ENCODE measurements at regions of chrX and their contacts with region 1.

Region 1: GRCh38 chrX:131938749-131939148 is 84.4 kb upstream of the STK26 start:
- DNase-seq: no peak
- H3K4me3 ChIP-seq: no peak overlapping the region
- CTCF ChIP-seq: no peak

Region 2: DNA sequence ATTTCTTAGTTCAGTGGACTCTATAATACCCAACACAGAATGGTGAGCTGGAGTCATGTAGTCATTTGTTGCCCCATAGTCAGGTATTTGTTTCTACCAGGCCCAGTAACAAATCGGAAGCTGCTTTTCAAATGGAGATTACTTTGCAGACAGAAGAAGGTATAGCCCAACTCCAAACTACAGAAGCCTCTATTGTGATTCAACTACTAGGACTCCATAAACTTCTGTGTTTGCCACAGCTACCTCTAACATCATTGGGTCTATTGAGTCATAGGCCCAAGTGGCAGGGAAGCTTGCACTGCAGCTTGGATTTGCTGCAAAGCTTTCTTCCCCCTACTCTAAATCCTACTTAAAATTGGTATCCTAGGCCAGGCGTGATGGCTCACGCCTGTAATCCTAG is 64.4 kb before region 1 on chrX:
- in situ Hi-C with region 1: no loop called
- DNase-seq: no peak
- H3K4me3 ChIP-seq: no peak overlapping the region
- CTCF ChIP-seq: no peak

Region 3: DNA sequence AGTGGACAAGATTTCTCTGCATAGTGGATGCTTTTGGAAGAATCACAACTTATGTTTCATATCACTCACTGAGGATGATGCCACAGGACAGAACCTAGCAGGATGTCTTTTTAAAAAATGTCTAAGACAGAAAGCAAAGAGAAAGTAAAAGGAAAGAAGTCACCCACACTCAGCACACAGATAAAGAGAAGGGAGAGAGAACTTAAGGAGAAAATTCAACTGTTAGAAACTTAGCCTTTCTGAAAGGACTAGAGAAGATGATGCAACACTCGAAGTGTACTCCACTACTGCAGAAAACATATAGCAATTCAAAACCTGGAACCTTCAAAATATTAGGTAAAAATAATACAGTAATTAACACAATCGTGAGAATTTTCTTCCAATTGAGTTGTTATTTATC is 31.6 kb after region 1 on chrX:
- in situ Hi-C with region 1: loop called (anchors 5 kb)
- DNase-seq: no peak
- H3K4me3 ChIP-seq: no peak overlapping the region
- CTCF ChIP-seq: no peak